Caco-2 (cell line): ENCODE measurements at regions of chr6 and their contacts with region 1.

Region 1: DNA sequence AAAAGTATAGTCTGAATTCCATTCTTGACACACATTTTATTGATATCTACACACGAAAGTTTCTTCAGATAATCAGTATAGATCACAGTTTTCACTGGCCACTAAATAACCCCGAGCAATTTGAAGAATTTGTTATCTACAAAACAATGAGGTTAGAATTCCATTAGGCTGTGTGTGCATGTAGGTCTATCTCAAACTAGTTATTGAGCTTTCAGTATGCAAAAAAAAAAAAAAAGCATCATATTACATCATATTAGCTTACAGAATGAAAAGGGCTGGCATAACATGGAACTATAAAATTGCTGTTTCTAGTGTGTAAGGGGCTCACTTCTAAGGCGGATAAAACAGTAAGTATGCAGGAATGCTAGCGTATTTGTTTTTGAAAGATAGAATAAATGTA is 59.5 kb upstream of the ADGRG6 start:
- DNase-seq: peak in 1 of 2 experiments; percentile 38
- H3K4me3 ChIP-seq: no peak overlapping the region
- H3K4me3 Mint-ChIP-seq: peak overlapping the region; percentile 26
- H3K27ac Mint-ChIP-seq: peak overlapping the region; percentile 78
- H3K4me1 ChIP-seq: peaks cover 35% of the 10 kb centered on the region
- H3K4me1 Mint-ChIP-seq: peaks cover 14% of the 10 kb centered on the region
- H3K27me3 ChIP-seq: no peaks in the 10 kb centered on the region
- H3K27me3 Mint-ChIP-seq: no peaks in the 10 kb centered on the region
- CTCF ChIP-seq: no peak

Region 2: GRCh38 chr6:142030115-142030619 is 212.1 kb before region 1 on chr6:
- CTCF ChIA-PET with region 1: no interaction called
- POLR2A ChIA-PET with region 1: no interaction called
- intact Hi-C with region 1: no loop called
- DNase-seq: no peak
- H3K4me3 ChIP-seq: peak overlapping the region; percentile 21
- H3K4me3 Mint-ChIP-seq: peak overlapping the region; percentile 46
- H3K27ac Mint-ChIP-seq: no peak overlapping the region
- H3K4me1 ChIP-seq: peaks cover 15% of the 10 kb centered on the region
- H3K4me1 Mint-ChIP-seq: peaks cover 10% of the 10 kb centered on the region
- H3K27me3 ChIP-seq: no peaks in the 10 kb centered on the region
- H3K27me3 Mint-ChIP-seq: peaks cover 3% of the 10 kb centered on the region
- CTCF ChIP-seq: no peak

Region 3: DNA sequence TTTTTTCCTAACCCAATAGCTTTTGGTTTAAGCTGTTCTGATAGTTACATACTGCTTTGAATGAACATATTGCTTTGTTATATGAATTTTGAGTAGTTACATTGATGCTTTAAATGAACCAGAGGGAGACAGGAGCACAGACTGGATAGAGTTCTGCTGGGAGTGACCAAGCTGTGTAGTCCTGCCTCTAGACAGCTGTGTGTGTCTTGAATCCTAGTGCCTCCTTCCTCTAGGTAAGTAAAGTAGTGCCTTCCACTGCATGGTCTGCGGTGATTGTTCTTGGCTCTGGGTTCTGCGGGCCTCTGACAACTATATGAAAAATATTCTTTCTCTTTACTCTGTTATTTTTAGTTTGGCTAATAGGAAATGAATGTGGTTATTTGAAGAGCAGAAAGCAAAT is 13.5 kb after region 1 on chr6:
- CTCF ChIA-PET with region 1: no interaction called
- POLR2A ChIA-PET with region 1: interaction called, 4 read pairs
- intact Hi-C with region 1: loop called (anchors 1 kb)
- DNase-seq: no peak
- H3K4me3 ChIP-seq: no peak overlapping the region
- H3K4me3 Mint-ChIP-seq: no peak overlapping the region
- H3K27ac Mint-ChIP-seq: no peak overlapping the region
- H3K4me1 ChIP-seq: peaks cover 22% of the 10 kb centered on the region
- H3K4me1 Mint-ChIP-seq: peaks cover 19% of the 10 kb centered on the region
- H3K27me3 ChIP-seq: no peaks in the 10 kb centered on the region
- H3K27me3 Mint-ChIP-seq: no peaks in the 10 kb centered on the region
- CTCF ChIP-seq: no peak